Activated naive CD4-positive, alpha-beta T cell treated with anti-CD3 and anti-CD28 coated beads for 36 hours (primary cell): ENCODE measurements at regions of chr19 and their contacts with region 1.

Region 1: DNA sequence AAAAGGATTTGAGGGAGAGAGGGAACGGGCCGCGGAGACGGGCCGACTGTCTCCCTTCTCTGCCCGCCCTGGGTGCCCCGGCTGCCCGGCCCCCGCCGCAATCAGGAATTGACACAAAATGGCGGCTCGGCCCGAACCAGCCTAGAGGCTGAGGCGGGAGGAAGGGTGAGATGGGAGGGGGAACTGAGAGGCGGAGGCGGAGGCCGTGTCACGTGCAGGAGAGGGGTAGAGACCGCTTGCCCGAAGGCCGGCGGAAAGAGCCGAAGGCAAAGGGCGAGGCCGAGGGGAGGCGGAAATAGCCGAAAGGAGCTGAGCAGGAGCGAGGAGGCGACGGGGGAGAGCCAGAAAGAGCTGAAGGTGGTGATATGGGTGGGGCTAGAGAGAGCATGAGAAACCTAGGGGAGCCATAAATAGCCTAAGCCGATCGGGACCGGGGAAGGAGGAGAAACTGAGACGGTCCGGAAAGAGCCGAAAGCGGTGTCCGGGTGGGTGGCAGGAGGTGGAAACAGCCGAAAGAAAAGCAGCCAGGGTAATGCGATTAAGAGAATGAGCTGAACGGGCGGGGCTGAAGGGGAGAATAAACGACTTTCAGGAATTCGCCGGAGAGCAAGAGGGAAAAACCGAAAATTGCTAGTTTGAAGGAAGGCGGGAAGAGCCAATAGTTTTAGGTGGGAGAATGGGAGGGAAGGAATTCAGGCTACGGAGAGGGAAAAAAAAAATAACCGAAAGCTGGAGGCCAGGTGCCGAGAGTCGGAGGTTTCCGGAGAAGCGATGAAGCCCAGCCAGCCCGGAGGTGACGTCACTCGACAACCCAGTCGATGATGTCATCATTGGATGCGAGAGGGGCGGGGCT is at the start of gene ZC3H4:
- DNase-seq: peak; percentile 100
- H3K4me3 Mint-ChIP-seq: peak within 1 kb of the TSS; percentile 99
- H3K27ac Mint-ChIP-seq: peak within 1 kb of the TSS; percentile 100
- H3K4me1 Mint-ChIP-seq: peaks cover 26% of the 10 kb centered on the region
- H3K27me3 Mint-ChIP-seq: no peaks in the 10 kb centered on the region
- total RNA-seq, gene ZC3H4: 46.0 to 48.8 TPM

Region 2: GRCh38 chr19:46860125-46860845 is 252.9 kb before region 1 on chr19:
- CTCF ChIA-PET with region 1: no interaction called
- intact Hi-C with region 1: loop called (anchors 1 kb)
- DNase-seq: peak; percentile 97
- H3K4me3 Mint-ChIP-seq: peak overlapping the region; percentile 84
- H3K27ac Mint-ChIP-seq: peak overlapping the region; percentile 87
- H3K4me1 Mint-ChIP-seq: peaks cover 21% of the 10 kb centered on the region
- H3K27me3 Mint-ChIP-seq: no peaks in the 10 kb centered on the region

Region 3: DNA sequence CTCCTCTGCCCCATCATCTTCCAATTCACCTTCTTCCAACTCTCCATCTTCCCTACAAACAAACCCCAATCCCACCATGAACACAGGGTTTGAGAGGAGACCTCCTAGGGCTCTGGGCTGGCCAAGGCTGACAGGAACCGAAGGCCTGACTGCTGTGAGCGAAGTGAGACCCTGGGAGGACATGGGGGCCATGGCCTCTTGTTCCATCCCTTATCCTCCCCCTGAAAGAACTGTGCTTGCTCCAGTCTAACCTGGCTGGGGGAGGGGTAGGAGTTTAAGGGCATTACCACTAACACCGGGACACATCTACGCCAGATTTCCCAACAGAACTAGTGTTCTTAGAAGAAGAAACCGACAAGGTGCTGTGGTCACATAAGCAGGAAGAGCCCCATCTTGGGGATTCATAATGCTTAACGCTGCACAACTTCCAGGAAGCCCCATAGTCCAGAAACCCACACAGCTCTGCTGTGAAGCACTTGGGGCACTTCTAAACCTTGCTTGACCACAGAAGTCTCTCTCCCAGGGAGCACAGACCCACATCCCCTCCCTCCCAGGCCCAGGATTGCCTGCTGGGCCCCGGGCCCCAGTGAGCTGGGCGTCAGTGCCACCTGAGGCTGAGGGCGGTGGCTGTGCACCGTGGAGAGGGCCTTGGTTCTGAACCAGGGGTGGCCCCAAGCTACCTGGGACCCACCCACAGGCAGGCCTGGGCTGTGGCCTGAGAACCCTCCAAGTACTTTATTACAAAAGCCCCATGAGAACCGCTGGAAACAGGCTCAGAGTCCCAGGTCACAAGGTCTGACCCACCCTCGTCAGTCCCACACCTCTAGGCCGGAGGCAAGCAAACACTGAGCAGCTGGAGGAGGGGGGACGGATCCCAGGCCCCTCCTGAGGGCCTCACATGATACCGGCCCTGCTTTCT is 18.4 kb before region 1 on chr19:
- CTCF ChIA-PET with region 1: interaction called, 5 read pairs
- intact Hi-C with region 1: loop called (anchors 1 kb)
- DNase-seq: peak; percentile 81
- H3K4me3 Mint-ChIP-seq: peak overlapping the region; percentile 41
- H3K27ac Mint-ChIP-seq: peak overlapping the region; percentile 94
- H3K4me1 Mint-ChIP-seq: peaks cover 53% of the 10 kb centered on the region
- H3K27me3 Mint-ChIP-seq: no peaks in the 10 kb centered on the region

Region 4: GRCh38 chr19:47157431-47158321 is 44.5 kb after region 1 on chr19:
- CTCF ChIA-PET with region 1: no interaction called
- intact Hi-C with region 1: loop called (anchors 2 kb)
- DNase-seq: peak; percentile 69
- H3K4me3 Mint-ChIP-seq: peak overlapping the region; percentile 57
- H3K27ac Mint-ChIP-seq: peak overlapping the region; percentile 98
- H3K4me1 Mint-ChIP-seq: peaks cover 76% of the 10 kb centered on the region
- H3K27me3 Mint-ChIP-seq: no peaks in the 10 kb centered on the region

Region 5: DNA sequence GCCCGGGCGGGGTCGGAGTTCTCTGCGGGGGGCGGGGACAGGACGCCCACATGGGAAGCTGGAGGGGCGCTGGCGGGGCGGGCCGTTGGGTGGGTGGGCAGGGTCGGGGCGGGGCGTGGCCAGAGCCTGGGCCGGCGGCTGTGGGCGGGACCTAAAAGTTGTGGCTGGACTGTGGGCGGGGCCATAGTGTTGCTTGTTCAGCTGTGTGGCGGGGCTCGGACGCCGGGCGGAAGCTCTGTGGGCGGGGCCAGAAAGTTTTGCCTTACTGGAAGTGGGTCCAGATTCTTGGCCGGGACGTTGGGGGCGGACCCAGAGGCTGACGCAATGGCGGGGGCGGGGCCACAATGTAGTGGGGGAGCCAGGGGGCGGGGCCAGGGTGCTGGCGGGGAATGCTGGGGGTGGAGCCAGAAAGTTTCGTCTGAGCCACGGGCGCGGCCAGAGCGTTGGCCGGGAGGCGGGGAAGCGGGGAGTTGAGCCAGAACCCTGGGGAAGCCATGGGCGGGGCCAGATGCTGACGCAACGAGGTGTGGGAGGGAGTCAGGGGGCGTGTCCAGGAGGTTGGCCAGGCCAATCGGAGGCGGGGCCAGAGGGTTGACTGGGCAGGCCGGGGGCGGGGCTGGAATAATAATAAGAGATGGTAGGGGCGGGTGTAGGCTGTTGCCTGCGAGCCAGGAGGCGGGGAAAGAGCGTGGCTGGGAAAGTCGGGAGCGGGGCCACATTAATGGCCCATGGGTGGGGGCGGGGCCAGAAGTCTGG is 143.6 kb after region 1 on chr19:
- CTCF ChIA-PET with region 1: no interaction called
- intact Hi-C with region 1: loop called (anchors 1 kb)
- DNase-seq: peak; percentile 100
- H3K4me3 Mint-ChIP-seq: peak overlapping the region; percentile 88
- H3K27ac Mint-ChIP-seq: peak overlapping the region; percentile 96
- H3K4me1 Mint-ChIP-seq: peaks cover 39% of the 10 kb centered on the region
- H3K27me3 Mint-ChIP-seq: no peaks in the 10 kb centered on the region